ENCODE measurements at regions of chr5 and their contacts with region 1.

Region 1: DNA sequence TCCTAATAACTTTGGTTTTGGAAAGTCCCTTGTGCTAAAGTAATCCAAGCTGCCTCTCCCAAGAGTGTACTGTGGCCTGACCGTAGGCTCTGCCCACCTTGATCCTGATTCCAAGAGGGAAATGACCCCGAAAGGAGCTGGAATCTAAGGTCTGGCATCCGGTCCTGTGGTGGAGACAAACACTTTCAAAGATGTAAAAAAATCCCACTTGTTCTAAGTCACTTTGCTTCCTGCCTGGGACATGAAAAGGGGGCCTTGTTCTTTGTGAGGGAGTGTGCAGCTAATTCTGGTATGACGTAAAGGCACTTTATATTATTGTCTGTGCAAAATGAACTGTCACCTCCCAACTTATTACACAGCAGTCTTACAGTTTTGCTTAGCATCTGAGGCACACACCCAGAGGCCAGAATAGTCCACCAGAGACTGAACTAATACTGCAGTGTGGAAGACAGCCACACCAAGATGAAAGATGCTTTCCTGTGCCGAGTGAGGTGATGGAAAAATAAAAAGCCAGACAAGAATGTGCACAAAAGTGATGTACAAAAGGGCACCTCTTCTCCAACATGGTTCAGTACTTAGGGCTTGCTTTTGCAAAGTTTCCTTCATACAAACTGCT is 128.7 kb downstream of the SLC12A2 start:
- DNase-seq: no peak
- H3K4me3 ChIP-seq: no peak overlapping the region
- H3K27ac ChIP-seq: no peak overlapping the region
- H3K4me1 ChIP-seq: peaks cover 0 to 2% (median under 1%) of the 10 kb centered on the region in 4 experiments
- H3K27me3 ChIP-seq: peaks cover 0 to 3% (median 0%) of the 10 kb centered on the region in 5 experiments

Region 2: GRCh38 chr5:128409166-128409800 is 197.0 kb after region 1 on chr5:
- CTCF ChIA-PET with region 1: no interaction called
- POLR2A ChIA-PET with region 1: no interaction called
- DNase-seq: no peak
- H3K4me3 ChIP-seq: no peak overlapping the region
- H3K27ac ChIP-seq: no peak overlapping the region
- H3K4me1 ChIP-seq: no peaks in the 10 kb centered on the region
- H3K27me3 ChIP-seq: no peaks in the 10 kb centered on the region

Region 3: GRCh38 chr5:128674825-128675446 is 462.6 kb after region 1 on chr5:
- CTCF ChIA-PET with region 1: interaction called, 10 read pairs
- POLR2A ChIA-PET with region 1: no interaction called
- DNase-seq: peak; percentile 19 to 51 (median 35)
- H3K4me3 ChIP-seq: no peak overlapping the region
- H3K27ac ChIP-seq: no peak overlapping the region
- H3K4me1 ChIP-seq: no peaks in the 10 kb centered on the region
- H3K27me3 ChIP-seq: no peaks in the 10 kb centered on the region